ENCODE measurements at regions of chr1 and their contacts with region 1.

Region 1: GRCh38 chr1:64268653-64269557 is 65.5 kb downstream of the UBE2U start:
- DNase-seq: peak; percentile 66 to 84
- H3K4me3 ChIP-seq: no peak overlapping the region
- H3K4me1 ChIP-seq: no peaks in the 10 kb centered on the region
- H3K27me3 ChIP-seq: peaks cover 22% of the 10 kb centered on the region

Region 2: GRCh38 chr1:64171797-64172281 is 97.1 kb before region 1 on chr1:
- in situ Hi-C with region 1: no loop called
- DNase-seq: no peak
- H3K4me3 ChIP-seq: no peak overlapping the region
- H3K4me1 ChIP-seq: peaks cover 4% of the 10 kb centered on the region; the same call in 1 of the 2 replicates
- H3K27me3 ChIP-seq: peaks cover 16% of the 10 kb centered on the region

Region 3: GRCh38 chr1:64675718-64676345 is 406.9 kb after region 1 on chr1:
- in situ Hi-C with region 1: loop called (anchors 10 kb)
- DNase-seq: no peak
- H3K4me3 ChIP-seq: no peak overlapping the region
- H3K4me1 ChIP-seq: no peaks in the 10 kb centered on the region
- H3K27me3 ChIP-seq: no peaks in the 10 kb centered on the region

Region 4: DNA sequence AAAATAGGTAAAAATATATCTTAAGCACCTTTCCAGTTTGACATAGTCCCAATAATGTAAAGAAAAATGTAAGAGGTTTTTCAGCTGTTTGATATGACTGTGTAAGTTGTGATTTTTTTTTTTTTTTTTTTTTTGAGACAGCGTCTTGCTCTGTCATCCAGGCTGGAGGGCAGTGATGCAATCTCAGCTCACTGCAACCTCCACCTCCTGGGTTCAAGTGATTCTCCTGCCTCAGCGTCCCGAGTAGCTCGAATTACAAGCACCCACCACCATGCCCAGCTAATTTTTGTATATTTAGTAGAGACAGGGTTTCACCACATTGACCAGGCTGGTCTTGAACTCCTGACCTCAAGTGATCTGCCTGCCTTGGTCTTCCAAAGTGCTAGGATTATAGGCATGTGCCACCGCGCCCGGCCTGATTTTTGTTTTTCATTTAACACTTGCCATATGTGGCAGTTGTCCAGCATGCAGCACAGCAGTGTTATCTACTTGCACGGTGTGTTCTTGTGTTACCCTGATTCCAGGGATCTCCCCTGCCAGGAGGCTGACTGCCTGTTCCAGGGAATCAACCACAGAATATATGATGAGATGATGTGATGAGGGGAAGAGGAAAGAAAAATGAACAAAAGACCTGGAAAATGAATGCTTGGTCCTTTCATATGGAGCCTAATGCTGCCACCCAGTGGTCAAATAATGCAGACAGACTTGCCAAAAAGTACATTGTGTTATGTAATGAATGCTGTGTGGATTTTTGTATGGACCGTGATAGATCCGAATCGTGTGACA is 555.0 kb after region 1 on chr1:
- in situ Hi-C with region 1: loop called (anchors 10 kb)
- DNase-seq: peak; percentile 81 to 82
- H3K4me3 ChIP-seq: no peak overlapping the region
- H3K4me1 ChIP-seq: peaks cover 7% of the 10 kb centered on the region; the same call in 1 of the 2 replicates
- H3K27me3 ChIP-seq: no peaks in the 10 kb centered on the region

Measured in HAP-1 (cell line).